ENCODE measurements at regions of chr14 and their contacts with region 1.

Region 1: DNA sequence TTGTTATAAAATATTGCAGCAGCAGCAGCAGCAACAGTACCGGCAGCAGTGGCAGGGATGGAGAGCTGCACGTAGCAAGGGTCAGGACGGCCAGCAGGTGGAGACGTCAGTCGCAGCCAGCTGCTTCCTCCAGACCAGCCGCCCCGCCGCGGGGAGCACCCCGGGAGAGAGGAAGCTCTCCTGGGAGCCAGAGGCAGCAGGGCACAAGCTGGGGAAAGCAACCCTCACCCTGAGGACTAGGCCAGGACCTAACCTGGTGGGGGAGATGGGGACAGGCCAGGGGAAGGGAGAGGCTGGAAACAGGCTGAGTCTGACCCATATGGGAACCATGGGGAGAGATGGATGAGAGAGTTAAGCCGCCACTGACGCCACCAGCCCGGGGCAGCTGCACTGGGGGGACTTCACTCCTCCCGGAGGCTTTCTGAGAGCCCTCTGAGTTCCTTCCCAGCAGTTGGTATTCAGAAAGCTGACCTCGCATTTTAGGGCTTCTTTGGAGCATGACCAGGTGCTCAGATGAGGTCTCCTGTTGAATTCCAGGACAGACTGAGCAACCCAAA is 56.3 kb downstream of the SPTB start:
- DNase-seq: peak; percentile 74 to 85
- ATAC-seq: peak; percentile 99

Region 2: DNA sequence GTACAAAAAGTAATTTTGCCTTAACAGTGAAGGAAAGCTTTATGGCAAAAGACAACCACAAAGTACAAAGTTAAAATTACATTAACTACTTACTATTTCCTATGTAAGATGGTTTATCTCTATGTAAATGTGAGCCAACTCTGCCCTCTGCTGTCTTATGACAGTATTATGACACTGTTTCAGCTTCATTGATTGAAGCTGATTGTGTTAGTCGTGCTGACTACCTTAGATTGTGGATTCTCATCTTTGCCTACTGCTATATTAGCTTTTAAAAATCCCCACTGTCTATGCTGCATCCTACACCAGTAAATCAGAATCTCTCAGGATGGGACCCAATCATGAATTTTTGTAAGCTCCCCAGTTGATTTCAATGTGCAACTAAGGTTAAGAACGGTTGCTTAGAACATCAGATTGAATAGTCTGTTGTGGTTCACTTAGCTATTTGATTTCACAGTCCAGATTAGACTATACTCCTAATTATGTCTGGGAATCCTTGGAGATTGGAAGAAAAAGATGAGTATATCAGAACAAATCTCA is 68.5 kb after region 1 on chr14:
- intact Hi-C with region 1: loop called in 1 of 2 experiments (anchors 10 kb)
- DNase-seq: no peak
- ATAC-seq: peak; percentile 92

Region 3: GRCh38 chr14:64986578-64987571 is 163.5 kb after region 1 on chr14 and contains the start of gene FNTB:
- intact Hi-C with region 1: loop called in 1 of 2 experiments (anchors 10 kb)
- DNase-seq: peak; percentile 97
- ATAC-seq: peak; percentile 96
- total RNA-seq, gene FNTB: 11.0 to 14.2 TPM

Measured in left colon (tissue), 2 donors.